Ovary (tissue), 10 donors: ENCODE measurements at regions of chr11 and their contacts with region 1.

Region 1: GRCh38 chr11:61336171-61336922 is 3.3 kb downstream of the TKFC start:
- DNase-seq: peak; percentile 83 to 91 (median 86)
- H3K4me3 ChIP-seq: no peak overlapping the region
- H3K27ac ChIP-seq: peak overlapping the region in 1 of 2 donors; percentile 92
- H3K4me1 ChIP-seq: peaks cover 25% of the 10 kb centered on the region
- H3K27me3 ChIP-seq: no peaks in the 10 kb centered on the region
- CTCF ChIP-seq: peak; percentile 92 to 98 (median 95)
- EP300 ChIP-seq: no peak
- POLR2A ChIP-seq: no peak

Region 2: GRCh38 chr11:61152816-61153592 is 183.3 kb before region 1 on chr11:
- intact Hi-C with region 1: no loop called
- DNase-seq: no peak
- H3K4me3 ChIP-seq: no peak overlapping the region
- H3K27ac ChIP-seq: no peak overlapping the region
- H3K4me1 ChIP-seq: peaks cover 11% of the 10 kb centered on the region
- H3K27me3 ChIP-seq: no peaks in the 10 kb centered on the region
- CTCF ChIP-seq: no peak
- EP300 ChIP-seq: no peak
- POLR2A ChIP-seq: no peak

Region 3: GRCh38 chr11:61384271-61385242 is 48.2 kb after region 1 on chr11:
- intact Hi-C with region 1: loop called (anchors 1 to 2 kb)
- DNase-seq: no peak
- H3K4me3 ChIP-seq: no peak overlapping the region
- H3K27ac ChIP-seq: no peak overlapping the region
- H3K4me1 ChIP-seq: peaks cover 2% of the 10 kb centered on the region
- H3K27me3 ChIP-seq: no peaks in the 10 kb centered on the region
- CTCF ChIP-seq: no peak
- EP300 ChIP-seq: no peak
- POLR2A ChIP-seq: no peak